Heart right ventricle (tissue), 16 donors: ENCODE measurements at regions of chr12 and their contacts with region 1.

Region 1: DNA sequence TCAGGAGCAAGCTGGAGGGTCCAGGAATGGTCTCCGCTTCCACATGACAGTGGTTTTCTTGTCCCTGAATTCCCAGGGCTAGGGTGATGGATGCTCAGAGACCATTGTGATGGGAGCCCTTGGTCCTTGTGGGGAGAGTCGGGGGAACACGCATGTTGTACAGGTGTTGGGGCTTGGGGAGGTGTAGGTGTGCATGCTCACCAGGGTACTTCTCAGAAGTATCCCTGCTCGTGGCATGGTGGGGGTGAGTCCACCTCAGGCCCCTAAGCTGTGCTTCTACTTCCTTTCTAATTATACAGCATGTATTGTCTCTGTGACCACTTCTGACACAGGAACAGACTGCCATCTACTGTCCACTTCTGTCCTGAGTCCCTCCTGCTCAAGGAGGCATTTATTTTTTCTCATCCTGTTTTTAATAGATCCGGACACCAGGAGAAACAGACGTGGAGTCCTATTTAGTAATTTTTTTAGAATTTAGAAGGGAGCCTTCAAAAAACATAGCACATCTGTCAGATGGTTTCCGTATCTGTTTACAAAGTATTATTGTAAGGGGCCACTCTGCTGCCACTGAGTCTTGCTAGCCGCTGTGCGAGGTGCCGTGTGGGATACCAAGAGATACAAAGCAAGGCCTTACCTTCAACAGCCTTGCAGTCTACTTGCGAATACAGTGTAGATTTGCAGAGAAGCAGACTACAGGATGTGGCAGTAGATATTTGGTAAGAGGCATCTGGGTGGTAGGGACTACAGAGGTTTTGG is 10.5 kb downstream of the NTF3 start:
- DNase-seq: peak in 1 of 2 donors; percentile 59
- ATAC-seq: peak; percentile 63 to 89 (median 81)
- H3K4me3 ChIP-seq: no peak overlapping the region
- H3K27ac ChIP-seq: no peak overlapping the region
- H3K4me1 ChIP-seq: peaks cover 0 to 45% (median 15%) of the 10 kb centered on the region in 9 donors
- H3K27me3 ChIP-seq: peaks cover 0 to 13% (median 0%) of the 10 kb centered on the region in 7 donors
- CTCF ChIP-seq: peak; percentile 36 to 79 (median 66)

Region 2: DNA sequence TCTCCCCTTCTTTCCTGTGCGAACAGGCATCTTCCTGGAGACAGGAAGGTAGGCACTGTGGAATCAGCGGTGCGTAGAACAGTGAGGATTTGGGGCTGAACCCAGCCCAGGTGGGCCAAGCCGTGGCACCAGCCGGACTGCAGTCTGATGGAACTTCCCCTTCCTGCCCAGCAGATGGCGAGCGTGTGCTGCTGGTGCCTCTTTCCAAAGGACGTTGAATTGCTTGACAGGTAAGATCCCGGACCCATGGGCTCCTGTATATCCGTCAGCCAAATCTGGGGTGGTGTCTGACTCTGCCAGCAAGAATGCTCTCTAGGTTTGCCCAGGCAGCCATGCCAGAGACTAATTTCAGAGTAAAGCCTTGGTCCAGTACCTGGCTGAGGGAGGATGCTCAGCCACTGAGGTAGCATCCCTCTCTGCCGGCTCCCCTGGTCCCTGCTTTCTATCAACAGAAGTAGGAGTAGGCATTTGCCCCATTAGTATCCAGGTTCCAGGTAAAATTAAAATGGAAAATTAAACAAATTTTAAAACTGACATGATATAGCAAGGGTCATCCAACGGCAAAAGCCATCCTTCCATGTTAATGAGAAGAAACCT is 419.9 kb before region 1 on chr12:
- intact Hi-C with region 1: loop called in 3 of 10 experiments (anchors 5 to 10 kb)
- DNase-seq: peak; percentile 33 to 47
- ATAC-seq: peak in 7 of 8 donors; percentile 12 to 68 (median 56)
- H3K4me3 ChIP-seq: no peak overlapping the region
- H3K27ac ChIP-seq: no peak overlapping the region
- H3K4me1 ChIP-seq: peaks cover 0 to 28% (median 7%) of the 10 kb centered on the region in 9 donors
- H3K27me3 ChIP-seq: peaks cover 0 to 4% (median 0%) of the 10 kb centered on the region in 7 donors
- CTCF ChIP-seq: peak; percentile 89 to 98 (median 94)

Region 3: GRCh38 chr12:5096241-5096935 is 346.0 kb before region 1 on chr12:
- intact Hi-C with region 1: loop called in 6 of 10 experiments (anchors 2 to 10 kb)
- DNase-seq: no peak
- ATAC-seq: peak in 3 of 8 donors; percentile 42 to 58 (median 53)
- H3K4me3 ChIP-seq: no peak overlapping the region
- H3K27ac ChIP-seq: no peak overlapping the region
- H3K4me1 ChIP-seq: no peaks in the 10 kb centered on the region
- H3K27me3 ChIP-seq: peaks cover 0 to 35% (median 19%) of the 10 kb centered on the region in 7 donors
- CTCF ChIP-seq: peak in 2 of 9 donors; percentile 18 to 25

Region 4: DNA sequence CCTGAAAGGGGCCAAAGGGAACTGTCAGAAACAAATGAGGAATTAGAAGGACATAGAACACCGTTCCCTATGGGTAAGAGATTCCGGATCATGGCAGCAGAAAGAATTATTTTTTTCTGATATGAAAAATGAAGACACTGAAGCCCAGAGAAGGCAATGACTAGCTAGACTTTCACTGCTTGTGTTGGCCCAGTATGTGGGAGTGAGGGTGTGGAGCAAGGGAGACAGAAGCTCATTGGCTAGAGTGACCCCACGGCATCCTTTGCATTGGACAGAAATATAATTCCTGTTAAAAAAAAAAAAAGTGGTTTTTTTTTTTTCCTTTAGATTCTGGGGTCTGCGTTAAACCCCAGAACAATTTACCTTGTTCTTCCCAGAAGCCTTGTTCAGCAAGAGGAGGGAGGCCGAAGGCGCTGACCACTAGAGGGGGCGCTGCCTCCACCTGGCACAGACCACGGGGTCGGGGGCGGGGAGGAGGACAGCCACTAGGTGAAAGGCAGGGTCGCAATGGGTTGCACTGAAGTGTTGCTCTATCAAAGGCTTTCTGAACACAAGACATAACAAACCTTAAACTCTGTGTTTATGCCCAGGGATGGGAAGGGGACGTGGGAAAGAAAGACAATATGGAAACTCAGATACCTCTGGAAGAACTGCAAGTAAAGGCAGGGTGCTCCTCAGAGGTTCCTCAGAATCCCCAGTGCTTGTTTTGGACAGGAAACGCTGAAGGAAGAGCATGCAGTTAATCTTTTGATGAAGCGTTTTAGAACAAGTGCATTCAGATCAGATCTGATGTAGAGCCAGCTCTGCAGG is 241.9 kb before region 1 on chr12:
- intact Hi-C with region 1: loop called (anchors 1 to 5 kb)
- DNase-seq: peak; percentile 33 to 65
- ATAC-seq: peak in 7 of 8 donors; percentile 61 to 84 (median 81)
- H3K4me3 ChIP-seq: no peak overlapping the region
- H3K27ac ChIP-seq: no peak overlapping the region
- H3K4me1 ChIP-seq: peaks cover 0 to 5% (median 0%) of the 10 kb centered on the region in 9 donors
- H3K27me3 ChIP-seq: peaks cover 0 to 36% (median 11%) of the 10 kb centered on the region in 7 donors
- CTCF ChIP-seq: peak; percentile 47 to 84 (median 79)

Region 5: GRCh38 chr12:5328669-5329517 is 113.5 kb before region 1 on chr12:
- intact Hi-C with region 1: no loop called
- DNase-seq: no peak
- ATAC-seq: no peak
- H3K4me3 ChIP-seq: no peak overlapping the region
- H3K27ac ChIP-seq: no peak overlapping the region
- H3K4me1 ChIP-seq: peaks cover 0 to 10% (median 0%) of the 10 kb centered on the region in 9 donors
- H3K27me3 ChIP-seq: no peaks in the 10 kb centered on the region
- CTCF ChIP-seq: no peak

Region 6: GRCh38 chr12:5567016-5567725 is 124.7 kb after region 1 on chr12:
- intact Hi-C with region 1: loop called in 1 of 10 experiments (anchors 10 kb)
- DNase-seq: peak; percentile 55 to 64
- ATAC-seq: peak; percentile 43 to 73 (median 65)
- H3K4me3 ChIP-seq: no peak overlapping the region
- H3K27ac ChIP-seq: no peak overlapping the region
- H3K4me1 ChIP-seq: peaks cover 0 to 28% (median 8%) of the 10 kb centered on the region in 9 donors
- H3K27me3 ChIP-seq: peaks cover 0 to 27% (median 0%) of the 10 kb centered on the region in 7 donors
- CTCF ChIP-seq: no peak